Mammary epithelial cell (primary cell): ENCODE measurements at regions of chr20 and their contacts with region 1.

Region 1: DNA sequence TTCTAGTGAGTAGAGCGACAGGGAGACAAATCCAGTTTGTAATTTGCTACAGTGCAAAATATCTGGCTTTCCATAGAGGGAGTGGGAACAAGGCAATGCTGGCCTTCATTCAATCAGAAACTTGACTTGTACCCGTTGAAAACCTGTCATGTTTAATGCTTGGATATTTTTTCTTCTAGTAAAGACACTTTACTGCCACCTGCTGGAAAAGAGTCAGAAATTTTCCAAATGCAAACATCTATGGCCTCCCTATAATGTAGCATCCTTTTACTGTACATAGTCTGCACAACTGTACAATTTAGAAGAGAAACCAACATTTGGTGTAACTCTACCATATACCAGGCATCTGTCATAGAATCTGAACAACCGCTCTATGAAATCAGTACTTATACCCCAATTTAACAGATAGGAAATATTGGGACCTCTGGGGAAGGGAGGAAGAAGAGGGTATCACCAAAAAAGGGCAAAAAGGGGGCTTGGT is 16.7 kb upstream of the TBC1D20 start:
- DNase-seq: peak; percentile 47
- H3K4me3 ChIP-seq: no peak overlapping the region
- H3K27ac ChIP-seq: no peak overlapping the region
- H3K4me1 ChIP-seq: no peaks in the 10 kb centered on the region
- H3K27me3 ChIP-seq: no peaks in the 10 kb centered on the region
- CTCF ChIP-seq: peak; percentile 36 to 60

Region 2: DNA sequence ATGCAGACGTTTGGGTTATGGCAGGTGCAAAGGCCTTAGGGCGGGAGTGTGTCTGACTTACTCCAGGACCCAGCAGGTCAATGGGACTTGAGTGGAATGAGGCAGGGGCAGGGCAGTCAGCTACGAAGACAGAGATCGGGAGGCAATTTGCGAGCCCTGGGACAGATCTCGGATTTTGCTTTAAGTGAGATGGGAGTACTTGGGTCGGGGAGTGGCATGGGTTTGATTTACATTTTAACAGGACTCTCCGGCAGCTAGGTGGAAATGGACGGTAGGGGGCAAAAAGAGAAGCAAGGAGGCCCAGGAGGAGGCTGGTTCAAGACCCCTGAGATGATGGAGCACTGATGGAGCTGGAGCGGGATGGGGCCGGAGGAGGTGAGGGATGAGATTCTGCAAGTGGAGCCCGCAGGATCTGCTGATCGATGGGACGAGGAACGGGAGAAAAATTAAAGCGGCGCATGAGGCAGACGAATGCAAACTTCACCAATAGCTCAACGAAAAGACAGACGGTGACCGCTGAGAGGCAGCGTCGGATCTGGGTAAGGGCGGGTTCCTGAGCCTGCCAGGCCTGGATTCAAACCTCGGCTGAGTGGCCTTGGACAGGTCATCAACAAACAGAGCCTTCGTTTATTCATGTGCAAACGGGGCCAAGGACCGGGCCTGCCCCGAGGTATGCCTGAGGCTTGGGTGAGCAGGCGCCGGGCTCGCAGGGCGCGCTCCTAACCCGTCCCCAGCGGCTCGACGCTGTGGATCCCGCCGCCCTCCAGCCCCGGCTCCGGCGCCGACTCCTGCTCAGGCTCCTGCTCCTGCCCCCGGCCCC is 71.6 kb before region 1 on chr20:
- CTCF ChIA-PET with region 1: interaction called, 14 read pairs
- dilution Hi-C with region 1: no loop called
- in situ Hi-C with region 1: no loop called
- intact Hi-C with region 1: no loop called
- DNase-seq: peak; percentile 77
- H3K4me3 ChIP-seq: peak overlapping the region; percentile 15 to 56 (median 48)
- H3K27ac ChIP-seq: peak overlapping the region; percentile 58
- H3K4me1 ChIP-seq: peaks cover 17% of the 10 kb centered on the region
- H3K27me3 ChIP-seq: no peaks in the 10 kb centered on the region
- CTCF ChIP-seq: peak; percentile 13

Region 3: DNA sequence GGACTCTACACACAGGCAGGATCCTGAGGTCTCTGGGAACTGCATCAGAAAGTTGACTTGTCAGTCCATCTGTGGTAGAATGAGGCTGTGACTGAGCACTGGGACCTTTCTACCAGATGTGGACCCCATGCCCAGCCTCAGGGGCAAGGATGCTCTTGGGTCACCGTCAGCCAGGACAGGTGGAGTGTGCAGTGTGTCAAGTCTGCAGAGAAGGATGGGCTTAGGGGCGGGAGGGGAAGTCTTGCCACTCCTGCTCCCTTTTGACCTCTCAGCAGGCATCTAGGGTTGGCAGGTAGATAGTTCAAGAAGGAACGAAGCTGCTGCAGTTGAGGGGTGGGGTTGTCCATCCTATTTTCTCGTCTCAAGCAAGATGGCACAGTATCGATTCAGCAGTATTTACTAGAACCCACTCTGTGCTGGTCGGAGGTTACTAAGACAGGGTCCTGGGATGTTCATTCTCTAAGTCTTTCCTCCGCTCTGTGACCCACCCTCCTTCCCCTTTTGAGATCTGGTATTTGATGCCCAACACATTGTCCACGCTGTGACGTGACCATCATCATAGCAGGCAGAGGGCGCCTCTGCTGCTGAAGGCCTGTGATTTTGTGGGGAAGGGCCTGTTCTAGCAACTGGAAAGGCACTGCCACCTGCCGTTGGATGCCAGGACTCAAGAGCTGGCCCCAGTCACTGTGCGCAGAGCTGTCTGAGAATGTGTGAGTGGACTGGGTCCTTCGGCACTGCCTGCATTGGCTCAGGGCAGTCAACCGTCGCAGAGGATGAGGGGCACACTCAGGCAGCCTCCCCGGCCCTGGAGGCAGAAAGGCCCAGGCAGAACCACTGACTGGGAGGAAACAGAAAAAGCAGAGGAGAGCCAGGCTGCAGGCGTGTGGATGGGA is 47.7 kb before region 1 on chr20:
- CTCF ChIA-PET with region 1: no interaction called
- dilution Hi-C with region 1: loop called (anchors 5 kb)
- in situ Hi-C with region 1: no loop called
- intact Hi-C with region 1: no loop called
- DNase-seq: peak; percentile 30
- H3K4me3 ChIP-seq: no peak overlapping the region
- H3K27ac ChIP-seq: no peak overlapping the region
- H3K4me1 ChIP-seq: peaks cover 3% of the 10 kb centered on the region
- H3K27me3 ChIP-seq: no peaks in the 10 kb centered on the region
- CTCF ChIP-seq: peak; percentile 43 to 68